Activated naive CD4-positive, alpha-beta T cell treated with anti-CD3 and anti-CD28 coated beads for 36 hours (primary cell): ENCODE measurements at regions of chr6 and their contacts with region 1.

Region 1: GRCh38 chr6:14711056-14711703 is 534.7 kb upstream of the JARID2 start:
- DNase-seq: peak; percentile 86
- H3K4me3 Mint-ChIP-seq: peak overlapping the region; percentile 31
- H3K27ac Mint-ChIP-seq: peak overlapping the region; percentile 87
- H3K4me1 Mint-ChIP-seq: peaks cover 36% of the 10 kb centered on the region
- H3K27me3 Mint-ChIP-seq: no peaks in the 10 kb centered on the region

Region 2: GRCh38 chr6:14210663-14211561 is 500.3 kb before region 1 on chr6:
- CTCF ChIA-PET with region 1: interaction called, 6 read pairs
- intact Hi-C with region 1: loop called (anchors 1 kb)
- DNase-seq: peak; percentile 88
- H3K4me3 Mint-ChIP-seq: peak overlapping the region; percentile 79
- H3K27ac Mint-ChIP-seq: peak overlapping the region; percentile 71
- H3K4me1 Mint-ChIP-seq: peaks cover 12% of the 10 kb centered on the region
- H3K27me3 Mint-ChIP-seq: no peaks in the 10 kb centered on the region

Region 3: DNA sequence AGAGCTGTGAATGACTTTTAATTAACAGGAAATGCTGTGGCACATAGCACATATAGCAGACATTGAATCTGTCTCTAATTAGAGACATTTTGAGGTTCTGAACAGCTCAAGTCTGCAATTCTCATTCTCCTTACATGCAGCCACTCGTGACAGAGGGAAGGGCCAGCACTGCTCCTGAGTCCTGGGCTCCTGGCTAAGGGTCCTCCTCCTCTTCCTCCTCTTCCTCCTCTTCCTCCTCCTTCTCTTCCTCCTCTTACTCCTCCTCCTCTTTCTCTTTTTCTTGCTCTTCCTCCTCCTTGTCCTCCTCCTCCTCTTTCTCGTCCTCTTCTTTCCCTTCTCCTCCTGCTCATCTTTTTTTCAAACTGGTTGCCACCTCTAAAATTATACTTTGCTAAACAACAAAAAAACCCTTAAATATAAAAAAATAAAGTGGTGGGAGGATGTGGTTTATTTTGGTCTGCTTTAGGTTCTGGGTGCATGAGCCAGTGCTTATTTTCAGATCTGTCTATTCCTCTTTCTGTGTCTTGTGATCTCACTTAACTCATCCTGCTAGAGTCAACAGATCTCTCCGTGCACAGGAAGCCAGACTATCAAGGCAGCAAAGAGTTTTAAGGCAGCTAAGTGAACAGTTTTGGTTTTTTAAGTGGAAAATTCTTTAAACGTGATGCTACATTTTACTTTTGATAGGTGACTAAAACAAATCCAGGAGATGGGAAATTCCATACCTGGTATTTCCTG is 434.3 kb before region 1 on chr6:
- CTCF ChIA-PET with region 1: interaction called, 3 read pairs
- intact Hi-C with region 1: loop called (anchors 5 kb)
- DNase-seq: peak; percentile 63
- H3K4me3 Mint-ChIP-seq: peak overlapping the region; percentile 40
- H3K27ac Mint-ChIP-seq: peak overlapping the region; percentile 85
- H3K4me1 Mint-ChIP-seq: peaks cover 37% of the 10 kb centered on the region
- H3K27me3 Mint-ChIP-seq: no peaks in the 10 kb centered on the region

Region 4: GRCh38 chr6:14452567-14453527 is 258.3 kb before region 1 on chr6:
- CTCF ChIA-PET with region 1: no interaction called
- intact Hi-C with region 1: loop called (anchors 2 kb)
- DNase-seq: peak; percentile 79
- H3K4me3 Mint-ChIP-seq: no peak overlapping the region
- H3K27ac Mint-ChIP-seq: no peak overlapping the region
- H3K4me1 Mint-ChIP-seq: peaks cover 53% of the 10 kb centered on the region
- H3K27me3 Mint-ChIP-seq: peaks cover 1% of the 10 kb centered on the region

Region 5: GRCh38 chr6:14660806-14661579 is 50.2 kb before region 1 on chr6:
- CTCF ChIA-PET with region 1: interaction called, 7 read pairs
- intact Hi-C with region 1: loop called (anchors 2 kb)
- DNase-seq: peak; percentile 71
- H3K4me3 Mint-ChIP-seq: no peak overlapping the region
- H3K27ac Mint-ChIP-seq: no peak overlapping the region
- H3K4me1 Mint-ChIP-seq: peaks cover 44% of the 10 kb centered on the region
- H3K27me3 Mint-ChIP-seq: no peaks in the 10 kb centered on the region

Region 6: GRCh38 chr6:14824484-14825275 is 113.5 kb after region 1 on chr6:
- CTCF ChIA-PET with region 1: no interaction called
- intact Hi-C with region 1: no loop called
- DNase-seq: no peak
- H3K4me3 Mint-ChIP-seq: no peak overlapping the region
- H3K27ac Mint-ChIP-seq: no peak overlapping the region
- H3K4me1 Mint-ChIP-seq: peaks cover 14% of the 10 kb centered on the region
- H3K27me3 Mint-ChIP-seq: no peaks in the 10 kb centered on the region